Gastrocnemius medialis (tissue), 4 donors: ENCODE measurements at regions of chr4 and their contacts with region 1.

Region 1: DNA sequence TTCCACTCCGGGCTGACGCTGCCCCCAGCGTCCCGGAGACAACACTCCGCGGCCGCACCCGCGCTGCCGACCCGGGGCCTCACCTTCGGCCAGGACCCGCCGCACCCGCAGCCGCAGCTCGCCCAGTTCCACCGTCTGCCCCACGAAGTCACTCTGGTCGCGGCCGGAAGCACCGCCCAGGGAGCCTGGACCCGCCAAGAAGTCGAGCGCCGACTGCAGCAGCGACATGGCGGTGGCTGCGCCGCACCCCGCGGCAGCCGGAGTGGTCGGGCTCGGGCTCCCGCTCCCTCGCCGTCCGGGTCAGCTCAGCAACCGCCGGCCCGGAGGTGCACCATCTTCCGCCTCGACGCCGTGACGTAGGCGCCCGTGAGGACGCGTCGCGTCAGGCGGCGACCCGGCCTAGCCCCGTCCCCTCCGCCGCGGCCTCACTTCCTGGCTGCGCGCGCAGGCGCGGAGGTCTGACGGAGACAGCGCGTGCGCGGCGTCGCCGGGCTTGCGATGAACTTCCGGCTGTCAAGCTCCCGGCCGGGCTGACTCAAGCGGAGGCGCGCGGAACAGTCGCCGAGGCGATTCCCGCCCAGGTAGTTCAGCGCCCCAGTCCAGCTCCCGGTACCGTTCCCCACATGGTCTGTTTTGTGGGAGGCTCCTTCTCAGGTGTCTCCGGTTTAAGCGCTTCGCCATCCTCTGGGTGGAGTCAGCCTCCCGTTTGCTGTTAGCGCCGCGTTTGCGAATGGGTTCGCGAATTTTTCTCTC is at the starts of genes GAK and TMEM175:
- DNase-seq: peak; percentile 87 to 95
- ATAC-seq: peak; percentile 81 to 88
- H3K4me3 ChIP-seq: peak within 1 kb of the TSS; percentile 85 to 97 (median 96)
- H3K27ac ChIP-seq: peak within 1 kb of the TSS; percentile 90 to 97 (median 94)
- H3K4me1 ChIP-seq: peaks cover 29 to 39% of the 10 kb centered on the region in 2 donors
- H3K27me3 ChIP-seq: no peaks in the 10 kb centered on the region
- CTCF ChIP-seq: no peak
- POLR2A ChIP-seq: peak; percentile 91 to 96
- total RNA-seq, gene GAK: 34.9 to 48.3 (median 44.5) TPM
- total RNA-seq, gene TMEM175: 15.3 to 29.6 (median 20.8) TPM

Region 2: GRCh38 chr4:683982-684622 is 248.0 kb before region 1 on chr4:
- in situ Hi-C with region 1: no loop called
- intact Hi-C with region 1: loop called (anchors 5 kb)
- DNase-seq: peak in 1 of 2 donors; percentile 64
- ATAC-seq: peak in 1 of 2 donors; percentile 14
- H3K4me3 ChIP-seq: no peak overlapping the region
- H3K27ac ChIP-seq: no peak overlapping the region
- H3K4me1 ChIP-seq: peaks cover 17 to 30% of the 10 kb centered on the region in 2 donors
- H3K27me3 ChIP-seq: peaks cover 0 to 19% (median 6%) of the 10 kb centered on the region in 3 donors
- CTCF ChIP-seq: peak; percentile 46 to 71 (median 62)
- POLR2A ChIP-seq: no peak

Region 3: DNA sequence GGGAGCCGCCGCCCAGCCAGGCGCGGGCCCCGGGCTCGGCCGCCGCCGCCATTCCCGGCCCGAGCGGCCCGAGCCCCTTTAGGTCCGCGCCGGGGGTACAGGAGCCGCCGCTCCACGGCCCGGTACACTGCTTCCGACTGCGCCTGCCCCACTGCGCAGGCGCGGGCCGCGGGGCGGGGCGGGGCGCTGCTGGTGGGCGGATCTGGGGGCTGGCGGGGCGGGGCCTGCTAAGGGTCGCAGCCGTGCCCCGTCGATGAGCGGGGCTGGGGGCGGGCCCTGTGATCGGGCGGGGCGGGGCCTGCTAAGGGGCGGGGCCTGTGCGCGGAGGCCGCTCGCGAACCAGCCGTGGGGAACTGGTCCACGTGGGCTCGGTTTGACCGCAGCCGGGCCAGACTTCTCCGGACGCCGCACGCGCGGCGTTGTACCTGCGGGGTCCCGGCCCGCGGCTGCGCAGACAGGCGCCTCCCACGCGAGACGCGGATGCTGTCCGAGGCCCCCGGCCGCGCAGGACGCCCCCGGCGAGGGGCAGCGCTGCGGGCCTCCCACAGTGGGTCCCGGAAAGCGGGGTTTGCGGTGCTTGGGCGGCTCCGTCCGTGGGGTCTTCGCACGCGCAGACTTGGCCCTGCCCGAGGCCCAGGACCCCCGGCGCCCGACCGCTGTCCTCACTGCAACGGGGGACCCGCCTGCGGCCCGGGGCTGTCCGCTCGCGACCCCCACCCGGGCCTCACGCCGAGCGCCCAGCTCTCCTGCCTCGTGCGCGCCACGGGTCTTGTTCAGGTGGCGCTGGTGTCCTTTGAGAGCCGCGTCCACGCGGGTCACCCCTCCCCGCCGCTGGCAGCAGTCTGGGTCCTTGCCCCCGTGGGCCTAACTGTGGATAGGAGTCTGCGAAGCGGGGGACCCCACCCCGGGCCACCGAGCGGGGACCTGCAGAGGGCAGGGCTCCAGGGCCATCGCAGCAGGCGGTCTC is 41.6 kb after region 1 on chr4 and contains the start of gene DGKQ:
- in situ Hi-C with region 1: no loop called
- intact Hi-C with region 1: loop called (anchors 1 kb)
- DNase-seq: peak; percentile 79 to 85
- ATAC-seq: peak; percentile 93 to 96
- H3K4me3 ChIP-seq: peak within 1 kb of the TSS; percentile 73 to 82 (median 79)
- H3K27ac ChIP-seq: no peak within 1 kb of the TSS
- H3K4me1 ChIP-seq: peaks cover 15 to 16% of the 10 kb centered on the region in 2 donors
- H3K27me3 ChIP-seq: no peaks in the 10 kb centered on the region
- CTCF ChIP-seq: no peak
- POLR2A ChIP-seq: peak in 1 of 2 donors; percentile 29
- total RNA-seq, gene DGKQ: 3.2 to 5.2 (median 4.5) TPM

Region 4: GRCh38 chr4:1011022-1011694 is 79.0 kb after region 1 on chr4 and contains the start of gene FGFRL1:
- in situ Hi-C with region 1: no loop called
- intact Hi-C with region 1: loop called (anchors 1 kb)
- DNase-seq: peak; percentile 87 to 88
- ATAC-seq: peak; percentile 62 to 63
- H3K4me3 ChIP-seq: peak within 1 kb of the TSS; percentile 63 to 97 (median 74)
- H3K27ac ChIP-seq: peak within 1 kb of the TSS; percentile 50 to 64 (median 62)
- H3K4me1 ChIP-seq: peaks cover 7 to 19% of the 10 kb centered on the region in 2 donors
- H3K27me3 ChIP-seq: peaks cover 19 to 23% (median 20%) of the 10 kb centered on the region in 3 donors
- CTCF ChIP-seq: no peak
- POLR2A ChIP-seq: peak in 1 of 2 donors; percentile 10
- total RNA-seq, gene FGFRL1: 10.4 to 32.4 (median 15.2) TPM